ENCODE measurements at regions of chr12 and their contacts with region 1.

Region 1: GRCh38 chr12:46635818-46636217 is 190.0 kb downstream of the SLC38A4 start:
- DNase-seq: no peak
- H3K4me3 ChIP-seq: no peak overlapping the region
- H3K27ac ChIP-seq: no peak overlapping the region
- H3K4me1 ChIP-seq: no peaks in the 10 kb centered on the region
- H3K27me3 ChIP-seq: no peaks in the 10 kb centered on the region
- CTCF ChIP-seq: no peak
- POLR2A ChIP-seq: no peak

Region 2: DNA sequence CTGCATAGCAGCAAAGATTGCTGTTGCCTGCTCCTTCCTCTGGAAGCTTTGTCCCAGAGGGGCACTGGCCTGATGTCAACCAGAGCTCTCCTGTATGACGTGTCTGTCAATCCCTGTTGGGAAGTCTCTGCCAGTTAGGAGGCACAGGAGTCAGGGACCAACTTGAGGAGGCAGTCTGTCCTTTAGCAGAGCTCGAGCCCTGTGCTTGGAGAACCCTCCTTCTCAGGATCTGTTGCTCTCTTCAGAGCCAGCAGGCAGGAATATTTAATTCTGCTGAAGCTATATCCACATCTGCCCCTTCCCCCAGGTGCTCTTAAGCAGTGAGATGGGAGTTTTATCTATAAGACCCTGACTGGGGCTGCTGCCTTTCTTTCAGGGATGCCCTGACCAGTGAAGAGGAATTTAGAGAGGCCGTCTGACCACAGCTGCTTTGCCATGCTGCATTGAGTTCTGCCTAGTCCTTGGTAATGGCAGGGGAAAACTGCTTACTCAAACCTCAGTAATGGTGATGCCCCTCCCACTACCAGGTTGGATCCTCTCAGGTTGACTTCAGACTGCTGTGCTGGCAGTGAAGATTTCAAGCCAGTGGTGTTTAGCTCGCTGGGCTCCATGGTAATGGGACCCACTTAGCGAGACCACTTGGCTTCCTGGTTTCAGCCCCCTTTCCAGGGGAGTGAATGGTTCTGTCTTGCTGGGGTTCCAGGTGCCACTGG is 44.7 kb before region 1 on chr12:
- CTCF ChIA-PET with region 1: no interaction called
- POLR2A ChIA-PET with region 1: no interaction called
- dilution Hi-C with region 1: no loop called
- intact Hi-C with region 1: loop called (anchors 2 kb)
- DNase-seq: no peak
- H3K4me3 ChIP-seq: no peak overlapping the region
- H3K27ac ChIP-seq: no peak overlapping the region
- H3K4me1 ChIP-seq: peaks cover 1% of the 10 kb centered on the region
- H3K27me3 ChIP-seq: no peaks in the 10 kb centered on the region
- CTCF ChIP-seq: no peak
- POLR2A ChIP-seq: no peak

Measured in endothelial cell of umbilical vein (primary cell).